ENCODE measurements at regions of chr19 and their contacts with region 1.

Region 1: DNA sequence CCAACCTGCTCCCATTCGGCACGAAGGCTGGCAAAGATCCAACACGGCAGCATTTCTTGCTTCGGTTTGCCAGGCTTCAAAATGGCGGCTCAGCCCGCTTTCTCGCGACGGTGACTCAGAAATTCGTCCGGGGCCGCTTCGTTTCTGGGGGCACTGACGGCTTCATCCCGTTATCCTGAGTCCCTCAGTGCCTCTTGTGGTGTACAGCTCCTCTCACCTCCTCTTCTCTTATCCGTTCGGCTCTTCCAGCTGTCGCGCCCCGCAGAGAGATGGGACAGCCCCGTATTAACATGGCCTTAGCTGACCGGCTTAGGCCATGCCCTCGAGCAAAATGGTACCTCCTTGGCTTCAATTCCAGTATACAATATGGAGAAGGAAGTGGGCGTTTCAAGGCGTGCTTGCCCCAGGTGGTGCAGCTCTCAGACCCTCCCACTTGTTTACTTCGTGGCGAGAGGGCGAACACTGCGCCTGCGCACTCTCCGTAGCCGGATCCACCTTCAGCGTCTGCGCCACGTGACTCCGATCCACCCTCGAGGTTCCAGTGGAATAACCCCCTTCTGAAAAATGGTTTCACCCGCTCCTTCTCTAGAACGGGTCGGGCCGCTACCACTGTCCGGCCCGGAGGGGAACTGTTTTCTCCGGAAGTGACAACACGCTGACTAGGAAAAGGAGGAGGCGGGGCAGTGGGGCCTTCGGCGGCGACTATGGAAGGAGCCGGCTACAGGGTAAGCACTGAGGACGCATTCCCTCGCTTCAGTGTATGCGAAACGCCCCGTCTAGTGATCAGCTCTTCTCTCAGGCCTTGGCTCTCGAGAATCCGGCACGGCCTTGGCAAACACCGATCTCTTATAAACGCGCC is at the starts of genes AKT1S1 and TBC1D17:
- DNase-seq: peak; percentile 99
- ATAC-seq: peak; percentile 75
- H3K4me3 Mint-ChIP-seq: no peak within 1 kb of the TSS
- H3K27ac Mint-ChIP-seq: no peak within 1 kb of the TSS
- H3K4me1 Mint-ChIP-seq: peaks cover 25% of the 10 kb centered on the region
- H3K27me3 Mint-ChIP-seq: no peaks in the 10 kb centered on the region
- total RNA-seq, gene AKT1S1: 16.1 to 20.3 TPM
- total RNA-seq, gene TBC1D17: 29.1 to 29.6 TPM

Region 2: GRCh38 chr19:49487277-49488045 is 389.8 kb before region 1 on chr19 and contains the start of gene RPL13A:
- CTCF ChIA-PET with region 1: no interaction called
- POLR2A ChIA-PET with region 1: no interaction called
- intact Hi-C with region 1: loop called in 1 of 2 experiments (anchors 1 kb)
- DNase-seq: peak; percentile 100
- ATAC-seq: peak; percentile 90
- H3K4me3 Mint-ChIP-seq: peak within 1 kb of the TSS; percentile 99
- H3K27ac Mint-ChIP-seq: peak within 1 kb of the TSS; percentile 97
- H3K4me1 Mint-ChIP-seq: peaks cover 26% of the 10 kb centered on the region
- H3K27me3 Mint-ChIP-seq: no peaks in the 10 kb centered on the region
- total RNA-seq, gene RPL13A: 3,861 to 3,967 TPM

Region 3: GRCh38 chr19:49676690-49677231 is 200.5 kb before region 1 on chr19:
- CTCF ChIA-PET with region 1: no interaction called
- POLR2A ChIA-PET with region 1: no interaction called
- intact Hi-C with region 1: loop called in 1 of 2 experiments (anchors 1 kb)
- DNase-seq: peak; percentile 100
- ATAC-seq: peak; percentile 77
- H3K4me3 Mint-ChIP-seq: peak overlapping the region; percentile 94
- H3K27ac Mint-ChIP-seq: peak overlapping the region; percentile 99
- H3K4me1 Mint-ChIP-seq: peaks cover 39% of the 10 kb centered on the region
- H3K27me3 Mint-ChIP-seq: no peaks in the 10 kb centered on the region

Region 4: GRCh38 chr19:49889687-49890348 is 12.6 kb after region 1 on chr19:
- CTCF ChIA-PET with region 1: interaction called, 4 read pairs
- POLR2A ChIA-PET with region 1: interaction called, 4 read pairs
- intact Hi-C with region 1: loop called (anchors 1 kb)
- DNase-seq: peak; percentile 89
- ATAC-seq: peak; percentile 61
- H3K4me3 Mint-ChIP-seq: peak overlapping the region; percentile 69
- H3K27ac Mint-ChIP-seq: peak overlapping the region; percentile 70
- H3K4me1 Mint-ChIP-seq: peaks cover 16% of the 10 kb centered on the region
- H3K27me3 Mint-ChIP-seq: no peaks in the 10 kb centered on the region

Region 5: DNA sequence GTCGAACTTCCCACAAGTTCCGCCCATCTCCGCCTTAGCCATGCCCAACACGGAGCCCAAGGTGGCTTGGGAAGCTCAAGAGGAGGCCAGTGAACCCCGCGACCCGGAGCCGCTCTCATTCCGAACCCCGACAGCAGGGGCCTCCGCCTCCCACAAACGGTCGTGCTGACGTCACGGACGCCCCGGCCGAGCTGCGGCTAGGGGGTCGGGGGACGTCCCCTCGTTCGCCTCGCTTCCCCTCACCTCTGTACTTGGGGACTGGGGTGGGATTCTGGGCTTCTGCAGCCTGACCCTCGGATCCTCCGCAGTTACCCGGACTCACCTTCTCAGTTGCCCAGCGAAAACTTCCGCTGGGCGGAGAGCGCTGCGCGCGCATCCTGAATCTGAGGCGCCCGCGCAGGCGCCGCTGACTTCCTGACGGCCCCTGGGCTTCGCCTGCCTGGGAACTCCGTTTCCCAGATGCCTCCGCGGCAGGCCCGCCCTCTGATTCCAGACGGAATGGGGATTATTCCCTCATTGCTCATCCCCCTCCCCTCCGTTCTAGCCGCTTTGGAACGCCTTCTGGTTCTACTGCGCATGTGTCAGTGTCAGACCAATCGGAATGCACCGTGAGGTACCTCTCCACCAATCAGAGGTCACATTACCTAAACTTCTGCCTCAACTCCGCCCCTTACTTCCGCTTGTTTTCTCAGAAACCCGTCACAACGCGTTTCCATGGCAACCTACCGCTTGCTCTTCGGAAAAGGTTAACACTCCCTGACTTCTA is 148.0 kb after region 1 on chr19 and contains the start of gene VRK3:
- CTCF ChIA-PET with region 1: no interaction called
- POLR2A ChIA-PET with region 1: no interaction called
- intact Hi-C with region 1: loop called (anchors 1 kb)
- DNase-seq: peak; percentile 98
- ATAC-seq: peak; percentile 91
- H3K4me3 Mint-ChIP-seq: peak within 1 kb of the TSS; percentile 85
- H3K27ac Mint-ChIP-seq: peak within 1 kb of the TSS; percentile 95
- H3K4me1 Mint-ChIP-seq: peaks cover 44% of the 10 kb centered on the region
- H3K27me3 Mint-ChIP-seq: no peaks in the 10 kb centered on the region
- total RNA-seq, gene VRK3: 52.4 to 61.2 TPM

Region 6: GRCh38 chr19:50804420-50805272 is 927.4 kb after region 1 on chr19:
- CTCF ChIA-PET with region 1: no interaction called
- POLR2A ChIA-PET with region 1: no interaction called
- intact Hi-C with region 1: loop called in 1 of 2 experiments (anchors 2 kb)
- DNase-seq: peak; percentile 99
- ATAC-seq: peak; percentile 99
- H3K4me3 Mint-ChIP-seq: peak overlapping the region; percentile 96
- H3K27ac Mint-ChIP-seq: peak overlapping the region; percentile 98
- H3K4me1 Mint-ChIP-seq: peaks cover 35% of the 10 kb centered on the region
- H3K27me3 Mint-ChIP-seq: no peaks in the 10 kb centered on the region